Endothelial cell of umbilical vein (primary cell): ENCODE measurements at regions of chr4 and their contacts with region 1.

Region 1: GRCh38 chr4:185304944-185305690 is 90.6 kb downstream of the LRP2BP start:
- DNase-seq: peak; percentile 18
- H3K4me3 ChIP-seq: no peak overlapping the region
- H3K27ac ChIP-seq: no peak overlapping the region
- H3K4me1 ChIP-seq: no peaks in the 10 kb centered on the region
- H3K27me3 ChIP-seq: no peaks in the 10 kb centered on the region
- CTCF ChIP-seq: peak; percentile 16 to 22
- POLR2A ChIP-seq: no peak

Region 2: DNA sequence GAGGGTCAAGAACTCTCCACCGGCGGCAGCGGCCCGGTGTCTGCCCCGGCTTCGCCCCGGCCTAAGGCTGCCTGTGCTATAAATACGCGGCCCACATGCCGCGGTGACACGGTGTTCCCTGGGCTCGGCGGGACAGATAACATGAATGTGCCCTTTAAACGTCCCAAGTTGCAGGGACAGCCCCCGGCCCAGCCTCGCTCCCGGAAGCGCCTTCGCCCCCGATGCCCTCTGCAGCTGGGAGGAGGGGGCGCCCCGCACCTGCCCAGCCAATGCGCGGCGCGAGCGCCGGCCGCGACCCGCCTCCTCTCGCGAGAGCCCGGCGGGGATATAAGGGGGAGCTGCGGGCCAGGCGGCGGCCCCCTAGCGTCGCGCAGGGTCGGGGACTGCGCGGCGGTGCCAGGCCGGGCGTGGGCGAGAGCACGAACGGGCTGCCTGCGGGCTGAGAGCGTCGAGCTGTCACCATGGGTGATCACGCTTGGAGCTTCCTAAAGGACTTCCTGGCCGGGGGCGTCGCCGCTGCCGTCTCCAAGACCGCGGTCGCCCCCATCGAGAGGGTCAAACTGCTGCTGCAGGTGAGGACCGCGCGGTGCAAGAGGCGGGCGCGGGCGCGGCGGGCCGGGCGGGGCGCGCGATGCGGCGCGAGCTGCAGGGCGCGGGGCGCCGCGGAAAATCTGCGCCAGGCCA is 162.1 kb before region 1 on chr4 and contains the start of gene SLC25A4:
- CTCF ChIA-PET with region 1: no interaction called
- POLR2A ChIA-PET with region 1: no interaction called
- dilution Hi-C with region 1: no loop called
- intact Hi-C with region 1: loop called (anchors 5 kb)
- DNase-seq: peak; percentile 77
- H3K4me3 ChIP-seq: peak within 1 kb of the TSS; percentile 52 to 75 (median 69)
- H3K27ac ChIP-seq: no peak within 1 kb of the TSS
- H3K4me1 ChIP-seq: peaks cover 12% of the 10 kb centered on the region
- H3K27me3 ChIP-seq: no peaks in the 10 kb centered on the region
- CTCF ChIP-seq: peak; percentile 43 to 62
- POLR2A ChIP-seq: peak; percentile 93
- total RNA-seq, gene SLC25A4: 13.7 and 13.9 TPM in 2 replicates

Region 3: GRCh38 chr4:185259719-185260118 is 45.4 kb before region 1 on chr4:
- CTCF ChIA-PET with region 1: interaction called, 3 read pairs
- POLR2A ChIA-PET with region 1: no interaction called
- dilution Hi-C with region 1: no loop called
- intact Hi-C with region 1: loop called (anchors 1 kb)
- DNase-seq: no peak
- H3K4me3 ChIP-seq: no peak overlapping the region
- H3K27ac ChIP-seq: no peak overlapping the region
- H3K4me1 ChIP-seq: no peaks in the 10 kb centered on the region
- H3K27me3 ChIP-seq: no peaks in the 10 kb centered on the region
- CTCF ChIP-seq: no peak
- POLR2A ChIP-seq: no peak